Sigmoid colon (tissue), 7 donors: ENCODE measurements at regions of chr5 and their contacts with region 1.

Region 1: GRCh38 chr5:138337685-138338410 is at the start of gene FAM53C:
- DNase-seq: peak; percentile 96
- H3K4me3 ChIP-seq: peak within 1 kb of the TSS; percentile 78 to 96 (median 88)
- H3K27ac ChIP-seq: peak within 1 kb of the TSS; percentile 93 to 96 (median 95)
- H3K4me1 ChIP-seq: peaks cover 0 to 33% (median 26%) of the 10 kb centered on the region in 4 donors
- H3K27me3 ChIP-seq: no peaks in the 10 kb centered on the region
- CTCF ChIP-seq: no peak
- EP300 ChIP-seq: peak in 1 of 4 donors; percentile 3
- POLR2A ChIP-seq: peak; percentile 89 to 94
- total RNA-seq, gene FAM53C: 26.8 to 28.5 (median 27.7) TPM

Region 2: DNA sequence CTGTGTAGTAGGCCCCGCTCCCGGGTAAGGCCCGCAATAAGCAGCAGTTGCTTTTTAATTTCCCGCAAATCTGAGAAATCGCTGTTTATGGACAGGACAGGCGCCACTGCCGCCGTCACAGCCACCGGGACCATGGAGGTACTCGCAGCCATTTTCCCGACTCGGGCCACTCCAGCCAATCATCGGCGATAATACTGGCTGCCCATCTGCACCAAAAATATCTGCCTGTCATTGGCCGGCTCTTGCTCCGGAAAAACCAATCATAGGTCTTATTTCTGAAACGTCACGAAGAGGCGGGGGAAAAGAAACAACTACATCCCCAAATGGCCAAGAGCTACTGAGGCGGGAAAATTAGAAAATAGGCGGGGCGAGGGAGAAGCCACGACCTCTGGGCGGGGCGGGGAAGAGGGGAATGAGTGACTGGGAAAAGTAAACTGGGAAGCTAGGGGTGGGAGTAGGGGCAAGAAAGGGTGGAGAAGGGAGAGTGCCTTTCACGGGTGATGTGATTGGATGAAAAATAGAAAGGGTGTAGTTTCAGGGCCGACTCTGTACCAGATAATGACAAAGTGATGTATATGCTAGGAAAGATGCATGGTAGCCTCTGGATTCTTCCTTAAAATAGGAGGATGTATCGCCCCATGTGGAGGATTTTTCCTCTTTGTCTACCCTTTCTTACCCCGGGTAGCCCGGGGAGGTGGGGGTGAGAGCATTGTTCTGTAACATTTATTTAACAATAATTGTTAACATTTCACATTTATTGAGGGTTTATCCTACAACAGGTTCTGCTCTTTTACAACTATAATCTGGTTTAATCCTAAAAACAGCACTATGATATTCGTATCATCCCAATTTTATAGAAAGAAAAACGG is 124.5 kb before region 1 on chr5 and contains the start of gene CDC23:
- intact Hi-C with region 1: loop called (anchors 5 kb)
- DNase-seq: peak; percentile 96
- H3K4me3 ChIP-seq: peak within 1 kb of the TSS; percentile 89 to 98 (median 92)
- H3K27ac ChIP-seq: peak within 1 kb of the TSS; percentile 82 to 85 (median 83)
- H3K4me1 ChIP-seq: peaks cover 0 to 29% (median 24%) of the 10 kb centered on the region in 4 donors
- H3K27me3 ChIP-seq: no peaks in the 10 kb centered on the region
- CTCF ChIP-seq: no peak
- EP300 ChIP-seq: no peak
- POLR2A ChIP-seq: peak; percentile 34 to 66
- total RNA-seq, gene CDC23: 17.2 to 33.1 (median 19.7) TPM

Region 3: GRCh38 chr5:138352071-138352721 is 14.3 kb after region 1 on chr5 and contains the start of gene KDM3B:
- intact Hi-C with region 1: loop called (anchors 1 kb)
- DNase-seq: peak; percentile 89
- H3K4me3 ChIP-seq: peak within 1 kb of the TSS; percentile 61 to 91 (median 88)
- H3K27ac ChIP-seq: peak within 1 kb of the TSS; percentile 95 to 98 (median 96)
- H3K4me1 ChIP-seq: peaks cover 0 to 34% (median 33%) of the 10 kb centered on the region in 4 donors
- H3K27me3 ChIP-seq: no peaks in the 10 kb centered on the region
- CTCF ChIP-seq: peak; percentile 97 to 100 (median 99)
- EP300 ChIP-seq: no peak
- POLR2A ChIP-seq: no peak
- total RNA-seq, gene KDM3B: 54.8 to 69.6 (median 55.8) TPM

Region 4: GRCh38 chr5:138438724-138439476 is 101.1 kb after region 1 on chr5 and contains the start of gene REEP2:
- intact Hi-C with region 1: no loop called
- DNase-seq: no peak
- H3K4me3 ChIP-seq: peak within 1 kb of the TSS; percentile 39 to 58 (median 50)
- H3K27ac ChIP-seq: peak within 1 kb of the TSS; percentile 69 to 76 (median 72)
- H3K4me1 ChIP-seq: peaks cover 0 to 22% (median 18%) of the 10 kb centered on the region in 4 donors
- H3K27me3 ChIP-seq: no peaks in the 10 kb centered on the region
- CTCF ChIP-seq: no peak
- EP300 ChIP-seq: no peak
- POLR2A ChIP-seq: no peak
- total RNA-seq, gene REEP2: 7.7 to 24.6 (median 14.8) TPM